ENCODE measurements at regions of chr10 and their contacts with region 1.

Region 1: GRCh38 chr10:6300106-6300783 is 97.5 kb downstream of the PFKFB3 start:
- DNase-seq: peak; percentile 78
- H3K4me3 Mint-ChIP-seq: peak overlapping the region; percentile 73
- H3K27ac Mint-ChIP-seq: peak overlapping the region; percentile 94
- H3K4me1 Mint-ChIP-seq: peaks cover 47% of the 10 kb centered on the region
- H3K27me3 Mint-ChIP-seq: no peaks in the 10 kb centered on the region

Region 2: DNA sequence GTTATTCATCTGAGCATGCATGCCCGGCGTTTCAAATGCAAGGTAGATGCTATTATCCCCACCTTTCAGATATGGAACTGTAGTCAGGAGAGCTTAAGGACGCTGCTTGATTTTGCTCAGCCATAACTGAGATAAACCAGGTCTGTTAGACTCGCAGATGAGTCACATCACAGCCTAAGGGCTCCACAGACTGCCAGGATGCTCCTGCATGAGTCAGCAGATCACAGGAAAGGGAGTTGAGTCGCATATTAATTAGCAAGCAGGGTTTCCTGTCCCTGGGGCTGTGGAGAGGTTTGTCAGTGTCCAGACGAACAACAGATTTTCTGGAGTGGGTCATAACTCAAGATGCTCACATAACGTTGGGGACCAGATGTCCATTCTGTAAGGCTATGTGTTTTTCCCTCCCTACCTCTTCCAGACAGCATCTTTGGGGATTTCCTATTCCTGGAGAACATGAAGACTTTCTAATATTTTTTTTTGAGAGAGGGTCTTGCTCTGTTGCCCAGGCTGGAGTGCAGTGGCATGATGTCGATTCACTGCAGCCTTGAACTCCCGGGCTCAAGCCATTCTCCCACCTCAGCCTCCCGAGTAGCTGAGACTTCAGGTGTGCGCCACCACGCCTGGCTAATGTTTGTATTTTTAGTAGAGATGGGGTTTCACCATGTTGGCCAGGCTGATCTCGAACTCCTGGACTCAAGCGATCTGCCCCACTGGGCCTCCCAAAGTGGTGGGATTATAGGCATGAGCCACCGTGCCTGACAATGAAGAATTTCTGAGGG is 60.8 kb before region 1 on chr10:
- intact Hi-C with region 1: loop called (anchors 2 kb)
- DNase-seq: peak; percentile 87
- H3K4me3 Mint-ChIP-seq: no peak overlapping the region
- H3K27ac Mint-ChIP-seq: peak overlapping the region; percentile 16
- H3K4me1 Mint-ChIP-seq: peaks cover 34% of the 10 kb centered on the region
- H3K27me3 Mint-ChIP-seq: no peaks in the 10 kb centered on the region

Measured in activated CD4-positive, alpha-beta T cell treated with anti-CD3 and anti-CD28 coated beads, Interleukin-2, amount 10 ng/mL, durations not matched to agents 24 days and 14 days (primary cell).